ENCODE measurements at regions of chr15 and their contacts with region 1.

Region 1: GRCh38 chr15:57306161-57306943 is 70.0 kb upstream of the CGNL1 start:
- DNase-seq: peak; percentile 81

Region 2: GRCh38 chr15:57146506-57147201 is 159.7 kb before region 1 on chr15:
- CTCF ChIA-PET with region 1: interaction called, 30 read pairs
- POLR2A ChIA-PET with region 1: no interaction called
- DNase-seq: peak; percentile 7

Region 3: DNA sequence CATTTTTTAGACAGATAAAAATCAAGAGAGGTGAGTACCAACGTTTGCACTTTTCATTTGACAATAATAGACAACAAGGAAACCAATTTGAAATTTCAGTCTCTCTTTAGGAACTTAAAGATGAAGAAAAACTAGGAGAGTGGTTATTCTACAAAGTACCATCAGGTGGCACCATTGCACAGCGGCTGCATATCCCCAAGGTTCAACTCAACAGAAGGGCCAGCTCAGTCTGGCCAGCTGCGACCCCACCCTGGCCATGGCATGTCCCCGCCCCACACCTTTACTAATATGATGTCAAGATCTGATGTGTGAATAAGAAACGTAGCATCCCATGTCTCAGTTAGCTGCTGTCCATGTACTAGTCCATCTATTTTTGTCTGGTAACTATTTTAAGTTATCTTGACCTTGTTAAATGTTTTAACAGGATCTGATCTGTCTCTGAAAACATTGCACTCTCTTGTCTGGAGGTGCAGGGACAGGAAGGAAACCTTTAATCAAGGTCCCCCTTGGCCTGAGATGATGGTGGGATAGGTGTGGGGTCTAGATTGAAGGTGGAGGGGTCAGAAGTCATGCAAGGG is 34.4 kb after region 1 on chr15:
- CTCF ChIA-PET with region 1: no interaction called
- POLR2A ChIA-PET with region 1: no interaction called
- DNase-seq: peak; percentile 39

Region 4: GRCh38 chr15:57353317-57353804 is 47.0 kb after region 1 on chr15:
- CTCF ChIA-PET with region 1: no interaction called
- POLR2A ChIA-PET with region 1: no interaction called
- DNase-seq: no peak

Measured in HEK293T (cell line).